HEK293T (cell line): ENCODE measurements at regions of chr6 and their contacts with region 1.

Region 1: GRCh38 chr6:113994918-113995342 is 24.0 kb upstream of the HDAC2 start:
- DNase-seq: peak; percentile 75

Region 2: GRCh38 chr6:113782636-113783035 is 212.3 kb before region 1 on chr6:
- CTCF ChIA-PET with region 1: no interaction called
- POLR2A ChIA-PET with region 1: no interaction called
- DNase-seq: no peak

Region 3: GRCh38 chr6:113924312-113924723 is 70.6 kb before region 1 on chr6:
- CTCF ChIA-PET with region 1: no interaction called
- POLR2A ChIA-PET with region 1: no interaction called
- DNase-seq: no peak

Region 4: GRCh38 chr6:113980937-113981554 is 13.9 kb before region 1 on chr6:
- CTCF ChIA-PET with region 1: interaction called, 11 read pairs
- POLR2A ChIA-PET with region 1: no interaction called
- DNase-seq: peak; percentile 69

Region 5: DNA sequence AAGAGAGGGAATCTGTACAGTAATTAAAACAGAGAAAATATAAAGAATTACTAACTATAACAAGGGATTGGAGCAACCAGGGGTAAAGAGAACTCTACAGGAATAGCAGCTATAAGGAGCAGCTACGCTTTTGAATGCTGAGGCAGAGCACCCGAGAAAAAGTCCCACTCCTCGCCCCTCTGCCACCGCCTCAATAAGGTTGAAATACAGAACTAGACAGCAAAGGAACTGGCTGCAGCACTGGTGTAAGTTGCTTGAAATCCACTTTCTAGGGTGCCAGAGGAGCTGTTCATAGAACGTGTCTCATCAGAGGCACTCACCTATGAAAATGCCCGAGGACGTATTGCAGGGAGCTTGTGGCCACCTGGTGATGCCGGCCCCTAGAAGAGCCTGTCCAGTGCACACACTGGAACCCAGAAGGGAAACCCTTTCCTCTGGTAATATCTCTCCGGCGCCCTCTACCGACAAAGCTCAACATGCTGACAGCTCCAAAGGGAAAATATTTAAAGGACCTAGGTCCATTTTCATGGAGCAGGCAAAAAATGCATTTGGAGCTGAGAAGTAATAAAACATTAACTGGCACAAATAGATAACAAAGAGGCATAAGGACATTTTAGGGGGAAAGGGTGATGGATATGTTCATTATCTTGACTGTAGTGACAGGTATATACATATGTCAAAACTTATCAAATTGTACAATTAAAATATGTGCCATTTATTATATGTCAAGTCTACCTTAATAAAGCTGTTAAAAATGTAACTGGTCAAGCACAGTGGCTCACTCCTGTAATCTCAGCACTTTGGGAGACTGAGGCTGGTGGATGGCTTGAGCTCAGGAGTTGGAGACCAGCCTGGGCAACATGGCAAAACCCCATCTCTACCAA is 113.4 kb after region 1 on chr6:
- CTCF ChIA-PET with region 1: interaction called, 10 read pairs
- POLR2A ChIA-PET with region 1: no interaction called
- DNase-seq: peak; percentile 75